HepG2 (cell line): ENCODE measurements at regions of chr5 and their contacts with region 1.

Region 1: DNA sequence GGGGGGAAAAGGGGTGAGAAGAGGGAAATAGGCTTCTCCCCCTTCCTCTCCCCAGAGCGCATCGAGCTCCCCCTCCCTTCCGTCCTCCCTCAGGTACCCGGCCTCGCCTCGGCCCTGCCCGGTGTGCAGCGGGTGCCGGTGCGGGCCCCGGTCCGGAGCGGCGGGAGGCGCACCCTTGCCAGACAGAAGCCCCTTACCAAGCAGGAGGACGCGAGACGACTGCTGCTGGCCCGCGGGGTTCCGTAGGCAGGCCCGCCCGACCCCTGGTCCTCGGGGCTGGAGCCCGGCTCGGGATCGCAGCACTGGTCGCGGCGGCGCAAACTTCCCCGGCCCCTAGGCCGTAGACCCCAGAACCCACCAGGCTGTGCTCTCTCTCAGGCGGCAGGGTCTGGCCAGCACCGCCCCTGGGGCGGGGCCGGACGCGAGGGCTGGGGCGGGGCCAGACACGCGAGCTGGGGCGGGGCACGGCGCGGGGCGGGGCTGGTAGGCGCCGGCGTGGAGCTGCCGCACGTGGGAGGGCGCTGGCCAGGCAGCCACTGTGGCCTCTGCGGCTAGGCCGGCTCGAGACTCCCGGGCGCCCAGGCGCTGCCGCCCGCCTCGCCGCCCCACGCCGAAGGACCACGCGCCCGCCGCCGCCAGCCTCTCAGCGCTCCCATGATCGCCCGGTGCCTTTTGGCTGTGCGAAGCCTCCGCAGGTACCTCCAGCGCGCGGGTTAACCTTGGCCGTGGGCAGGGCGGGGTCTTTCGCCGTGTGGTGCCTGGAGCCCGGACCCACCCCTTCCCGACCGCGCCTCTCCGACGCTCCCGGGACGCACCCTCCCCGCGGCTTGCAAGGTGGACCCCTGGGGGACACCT is at the starts of genes NLN and SGTB:
- DNase-seq: peak; percentile 63
- ATAC-seq: peak; percentile 95
- H3K4me3 ChIP-seq: peak within 1 kb of the TSS; percentile 71 to 90 (median 80)
- H3K27ac ChIP-seq: peak within 1 kb of the TSS; percentile 74
- H3K4me1 ChIP-seq: peaks cover 67% of the 10 kb centered on the region
- H3K27me3 ChIP-seq: no peaks in the 10 kb centered on the region; a peak in 1 of 5 replicates
- CTCF ChIP-seq: 0 out of 2 replicates have a peak, but pooled peaks have one; percentile 2
- EP300 ChIP-seq: no peak
- POLR2A ChIP-seq: peak; percentile 44 to 85; a peak in 3 of 4 replicates
- RAD21 ChIP-seq: peak; percentile 24
- total RNA-seq, gene NLN: 36.7 and 62.9 TPM in 2 replicates
- total RNA-seq, gene SGTB: 11.2 and 13.9 TPM in 2 replicates

Region 2: GRCh38 chr5:65779643-65780042 is 57.7 kb after region 1 on chr5:
- CTCF ChIA-PET with region 1: no interaction called
- POLR2A ChIA-PET with region 1: no interaction called
- in situ Hi-C with region 1: no loop called
- intact Hi-C with region 1: no loop called
- DNase-seq: no peak
- ATAC-seq: no peak
- H3K4me3 ChIP-seq: no peak overlapping the region
- H3K27ac ChIP-seq: no peak overlapping the region
- H3K4me1 ChIP-seq: no peaks in the 10 kb centered on the region
- H3K27me3 ChIP-seq: no peaks in the 10 kb centered on the region
- CTCF ChIP-seq: no peak
- EP300 ChIP-seq: no peak
- POLR2A ChIP-seq: no peak
- RAD21 ChIP-seq: no peak

Region 3: DNA sequence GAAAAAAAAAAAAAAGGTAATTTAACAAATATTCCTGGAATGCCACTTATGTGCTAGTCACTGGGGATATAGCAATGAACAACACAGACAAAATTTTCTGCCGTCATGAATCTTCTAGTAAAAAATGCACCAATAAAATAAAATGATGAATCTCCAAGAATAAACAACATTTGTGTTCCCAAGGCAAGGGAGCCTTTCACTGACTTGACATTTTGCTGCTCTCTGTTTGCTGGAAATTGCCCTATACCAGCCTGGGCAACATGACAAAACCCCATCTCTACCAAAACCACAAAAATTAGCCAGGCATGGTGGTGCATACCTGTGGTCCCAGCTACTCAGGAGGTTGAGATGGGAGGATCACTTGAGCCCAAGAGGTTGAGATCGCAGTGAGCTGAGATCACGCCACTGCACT is 139.9 kb after region 1 on chr5:
- CTCF ChIA-PET with region 1: no interaction called
- POLR2A ChIA-PET with region 1: no interaction called
- in situ Hi-C with region 1: no loop called
- intact Hi-C with region 1: no loop called
- DNase-seq: no peak
- ATAC-seq: no peak
- H3K4me3 ChIP-seq: no peak overlapping the region
- H3K27ac ChIP-seq: no peak overlapping the region
- H3K4me1 ChIP-seq: no peaks in the 10 kb centered on the region; the same call in 1 of the 2 replicates
- H3K27me3 ChIP-seq: no peaks in the 10 kb centered on the region
- CTCF ChIP-seq: no peak
- EP300 ChIP-seq: no peak
- POLR2A ChIP-seq: no peak
- RAD21 ChIP-seq: no peak

Region 4: GRCh38 chr5:66144074-66144833 is 422.3 kb after region 1 on chr5 and contains the start of gene SREK1:
- CTCF ChIA-PET with region 1: no interaction called
- POLR2A ChIA-PET with region 1: interaction called, 3 read pairs
- in situ Hi-C with region 1: no loop called
- intact Hi-C with region 1: loop called (anchors 10 kb)
- DNase-seq: peak; percentile 82
- ATAC-seq: peak; percentile 95
- H3K4me3 ChIP-seq: peak within 1 kb of the TSS; percentile 82 to 92 (median 90)
- H3K27ac ChIP-seq: peak within 1 kb of the TSS; percentile 98
- H3K4me1 ChIP-seq: peaks cover 27% of the 10 kb centered on the region
- H3K27me3 ChIP-seq: no peaks in the 10 kb centered on the region; a peak in 1 of 5 replicates
- CTCF ChIP-seq: no peak
- EP300 ChIP-seq: no peak
- POLR2A ChIP-seq: peak; percentile 83 to 89
- RAD21 ChIP-seq: peak; percentile 53; the same call in 1 of the 2 replicates
- total RNA-seq, gene SREK1: 46.5 and 90.9 TPM in 2 replicates